Ovary (tissue), 10 donors: ENCODE measurements at regions of chr4 and their contacts with region 1.

Region 1: DNA sequence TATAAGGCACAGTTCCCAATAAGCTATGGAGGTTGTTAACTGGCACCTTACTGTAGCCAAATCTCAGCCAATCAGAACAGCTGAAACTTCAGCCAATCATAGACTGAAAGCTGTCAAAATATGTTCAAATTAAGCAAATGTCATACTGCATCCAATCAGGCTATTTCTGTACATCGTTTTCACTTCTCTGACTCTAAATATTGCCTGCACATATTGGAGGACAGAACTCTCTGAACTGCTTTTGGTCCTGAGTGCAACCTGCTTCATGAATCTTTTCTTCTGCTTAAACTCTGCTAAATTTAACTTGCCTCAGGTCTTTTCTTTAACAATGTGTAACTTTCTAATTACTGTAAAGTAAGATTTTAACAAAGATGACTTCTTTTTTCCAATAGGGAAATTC is 1198.9 kb upstream of the PCDH7 start:
- DNase-seq: no peak
- H3K4me3 ChIP-seq: no peak overlapping the region
- H3K27ac ChIP-seq: no peak overlapping the region
- H3K4me1 ChIP-seq: no peaks in the 10 kb centered on the region
- H3K27me3 ChIP-seq: no peaks in the 10 kb centered on the region
- CTCF ChIP-seq: no peak
- EP300 ChIP-seq: no peak
- POLR2A ChIP-seq: no peak

Region 2: GRCh38 chr4:29390921-29391320 is 130.4 kb before region 1 on chr4:
- intact Hi-C with region 1: loop called in 1 of 4 experiments (anchors 5 kb)
- DNase-seq: no peak
- H3K4me3 ChIP-seq: no peak overlapping the region
- H3K27ac ChIP-seq: no peak overlapping the region
- H3K4me1 ChIP-seq: no peaks in the 10 kb centered on the region
- H3K27me3 ChIP-seq: no peaks in the 10 kb centered on the region
- CTCF ChIP-seq: no peak
- EP300 ChIP-seq: no peak
- POLR2A ChIP-seq: no peak